Adrenal gland (tissue), 19 donors: ENCODE measurements at regions of chr7 and their contacts with region 1.

Region 1: GRCh38 chr7:85890244-85890811 is 703.5 kb upstream of the SEMA3D start:
- DNase-seq: no peak
- H3K4me3 ChIP-seq: no peak overlapping the region
- H3K27ac ChIP-seq: no peak overlapping the region
- H3K4me1 ChIP-seq: no peaks in the 10 kb centered on the region
- H3K27me3 ChIP-seq: no peaks in the 10 kb centered on the region
- CTCF ChIP-seq: peak; percentile 32 to 66 (median 54)
- POLR2A ChIP-seq: no peak

Region 2: GRCh38 chr7:85940798-85941197 is 50.5 kb after region 1 on chr7:
- intact Hi-C with region 1: no loop called
- DNase-seq: no peak
- H3K4me3 ChIP-seq: no peak overlapping the region
- H3K27ac ChIP-seq: no peak overlapping the region
- H3K4me1 ChIP-seq: no peaks in the 10 kb centered on the region
- H3K27me3 ChIP-seq: no peaks in the 10 kb centered on the region
- CTCF ChIP-seq: no peak
- POLR2A ChIP-seq: no peak

Region 3: DNA sequence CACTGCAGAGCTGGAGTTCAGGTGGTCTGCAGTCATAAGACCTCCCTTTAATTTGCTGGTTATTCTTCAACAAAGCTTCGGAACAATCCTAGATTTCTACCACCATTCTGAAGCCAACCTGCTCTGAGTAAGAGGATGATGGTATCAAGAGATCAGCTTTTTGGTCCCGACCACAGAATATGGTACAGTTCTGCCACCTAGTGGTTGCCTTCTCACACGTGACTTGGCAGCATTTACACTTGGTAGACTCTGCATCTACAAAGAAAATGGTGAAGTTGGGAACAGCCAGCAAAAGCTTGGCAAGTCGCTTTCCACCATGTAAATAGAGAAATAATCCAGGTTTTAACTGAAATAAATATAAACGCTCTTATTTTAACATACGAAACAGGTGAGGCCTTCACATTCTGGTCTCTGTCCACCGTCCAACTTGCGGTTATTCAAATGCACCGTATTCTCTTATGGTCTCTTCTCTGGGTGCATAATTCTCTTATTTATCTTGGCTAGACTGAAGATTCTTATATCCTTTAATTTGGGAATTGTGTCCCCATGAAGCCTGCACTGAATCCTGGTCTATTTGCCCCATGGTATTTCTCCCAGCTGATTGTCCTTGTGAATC is 579.5 kb after region 1 on chr7:
- intact Hi-C with region 1: loop called in 1 of 2 experiments (anchors 5 kb)
- DNase-seq: peak; percentile 50 to 85 (median 72)
- H3K4me3 ChIP-seq: no peak overlapping the region
- H3K27ac ChIP-seq: no peak overlapping the region
- H3K4me1 ChIP-seq: no peaks in the 10 kb centered on the region
- H3K27me3 ChIP-seq: no peaks in the 10 kb centered on the region
- CTCF ChIP-seq: peak; percentile 50 to 82 (median 74)
- POLR2A ChIP-seq: no peak

Region 4: GRCh38 chr7:86904949-86905834 is 1014.9 kb after region 1 on chr7:
- intact Hi-C with region 1: loop called in 1 of 2 experiments (anchors 10 kb)
- DNase-seq: peak; percentile 21 to 55 (median 28)
- H3K4me3 ChIP-seq: no peak overlapping the region
- H3K27ac ChIP-seq: no peak overlapping the region
- H3K4me1 ChIP-seq: no peaks in the 10 kb centered on the region
- H3K27me3 ChIP-seq: no peaks in the 10 kb centered on the region
- CTCF ChIP-seq: peak; percentile 43 to 62 (median 56)
- POLR2A ChIP-seq: no peak